ENCODE measurements at regions of chr9 and their contacts with region 1.

Region 1: DNA sequence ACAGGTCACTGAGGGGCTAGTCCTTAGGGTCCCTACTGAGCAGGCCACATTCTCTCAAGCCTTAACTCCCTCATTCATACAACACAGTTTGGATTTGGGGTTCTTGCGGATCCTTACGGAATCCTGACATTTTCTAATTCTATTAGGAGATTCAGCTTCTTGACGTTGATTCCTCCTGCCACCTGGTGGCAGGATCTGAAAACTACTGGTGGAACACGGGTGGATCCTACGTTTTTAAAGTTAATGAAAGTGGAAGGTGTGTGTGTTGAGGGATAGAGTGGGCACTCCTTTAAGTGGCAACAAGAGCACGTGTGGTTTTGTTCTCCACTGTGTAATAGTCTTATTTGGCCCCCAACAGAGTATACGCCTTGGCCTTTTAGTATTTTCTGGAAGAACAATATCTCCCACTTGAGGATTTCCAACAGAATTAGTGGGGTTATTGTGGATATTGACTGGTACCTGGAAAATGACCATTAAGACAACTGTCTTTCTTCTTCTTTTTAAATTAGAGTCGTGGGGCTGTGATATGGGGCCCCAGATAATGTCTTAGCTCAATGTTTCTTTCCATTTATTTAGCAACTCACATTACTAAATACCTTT is 25.2 kb downstream of the SLC28A3 start:
- DNase-seq: peak; percentile 63
- H3K4me3 ChIP-seq: no peak overlapping the region
- H3K27ac ChIP-seq: no peak overlapping the region
- H3K4me1 ChIP-seq: peaks cover 0 to 7% (median 2%) of the 10 kb centered on the region in 4 donors
- H3K27me3 ChIP-seq: no peaks in the 10 kb centered on the region
- CTCF ChIP-seq: peak; percentile 71 to 79 (median 78)
- EP300 ChIP-seq: no peak
- POLR2A ChIP-seq: no peak

Region 2: DNA sequence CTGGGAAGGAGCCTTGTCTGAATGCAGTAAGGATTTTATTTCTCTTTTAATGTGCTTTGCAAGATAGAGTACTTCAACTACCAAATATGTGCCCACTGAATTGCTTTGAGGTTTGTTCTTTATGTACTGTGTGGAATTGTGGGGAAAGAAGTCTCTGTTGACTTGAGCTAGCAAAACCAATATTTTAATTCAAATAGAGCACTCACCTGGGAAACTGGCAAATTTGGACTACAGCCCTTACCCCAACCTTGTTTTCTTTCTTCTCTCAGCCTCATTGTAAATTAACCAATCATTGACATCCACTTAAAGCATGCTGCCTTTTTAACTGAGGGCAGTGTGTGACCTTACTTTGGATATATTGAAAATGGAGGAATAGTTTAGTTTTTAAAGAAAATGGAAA is 1917.8 kb before region 1 on chr9:
- in situ Hi-C with region 1: no loop called
- intact Hi-C with region 1: no loop called
- DNase-seq: no peak
- H3K4me3 ChIP-seq: no peak overlapping the region
- H3K27ac ChIP-seq: no peak overlapping the region
- H3K4me1 ChIP-seq: no peaks in the 10 kb centered on the region
- H3K27me3 ChIP-seq: no peaks in the 10 kb centered on the region
- CTCF ChIP-seq: no peak
- EP300 ChIP-seq: no peak
- POLR2A ChIP-seq: no peak

Region 3: DNA sequence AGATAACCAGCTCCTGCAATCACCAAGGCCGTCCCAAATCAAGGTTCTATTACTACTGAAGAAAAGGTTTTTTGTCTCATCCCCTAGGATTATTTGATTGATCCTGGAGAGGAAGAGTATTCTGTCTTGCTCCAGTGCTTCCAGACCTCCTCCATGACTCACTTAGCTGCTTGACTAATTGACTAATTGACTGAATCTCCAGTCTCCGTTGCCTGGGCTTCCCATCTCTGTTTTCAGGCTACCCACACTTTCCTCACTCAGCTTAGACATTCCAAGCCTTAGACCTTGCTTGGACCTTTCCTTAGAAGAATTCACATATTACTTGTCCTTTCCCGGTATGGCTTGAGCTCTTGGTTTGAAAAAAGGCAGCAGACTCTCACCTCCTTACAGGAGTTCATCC is 837.8 kb before region 1 on chr9:
- in situ Hi-C with region 1: no loop called
- intact Hi-C with region 1: no loop called
- DNase-seq: no peak
- H3K4me3 ChIP-seq: no peak overlapping the region
- H3K27ac ChIP-seq: no peak overlapping the region
- H3K4me1 ChIP-seq: peaks cover 4 to 24% (median 19%) of the 10 kb centered on the region in 4 donors
- H3K27me3 ChIP-seq: no peaks in the 10 kb centered on the region
- CTCF ChIP-seq: no peak
- EP300 ChIP-seq: no peak
- POLR2A ChIP-seq: no peak

Region 4: DNA sequence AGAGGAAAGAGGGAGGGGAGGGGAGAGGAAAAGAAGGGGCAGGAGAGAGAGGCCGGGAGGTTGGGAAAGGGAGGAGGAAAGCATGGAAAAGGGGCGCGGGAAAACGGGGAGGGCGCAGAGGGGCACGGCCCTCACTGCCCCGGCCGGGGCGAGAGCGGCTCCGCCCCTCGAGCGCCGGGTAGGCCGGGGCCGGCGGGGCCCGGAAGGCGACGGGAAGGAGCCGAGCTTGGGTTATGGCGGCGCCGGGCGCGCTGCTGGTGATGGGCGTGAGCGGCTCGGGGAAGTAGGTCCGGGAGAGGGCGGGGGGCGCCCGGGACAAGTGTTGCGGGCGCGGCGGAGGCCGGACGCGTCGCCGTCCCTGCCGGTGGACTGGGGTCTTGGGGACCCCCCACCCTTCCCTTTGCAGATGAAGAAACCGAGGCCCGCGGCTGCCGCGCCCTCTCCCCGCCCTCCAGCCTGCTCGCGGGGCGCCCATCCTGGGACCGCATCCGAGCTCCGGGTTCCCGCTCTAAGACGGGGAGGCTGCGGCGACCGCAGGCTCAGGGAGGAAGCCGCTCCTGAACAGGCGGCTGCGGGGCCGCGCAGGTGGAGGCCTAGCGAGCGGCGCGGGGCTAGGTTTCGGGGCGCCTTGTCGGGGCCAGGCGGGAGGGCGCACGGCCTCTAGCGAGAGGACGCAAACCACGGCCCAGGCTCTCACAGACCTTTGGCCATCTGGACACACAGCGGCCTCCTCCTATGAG is 692.3 kb before region 1 on chr9 and contains the start of gene IDNK:
- in situ Hi-C with region 1: loop called in 1 of 4 experiments (anchors 25 kb)
- intact Hi-C with region 1: no loop called
- DNase-seq: peak; percentile 48
- H3K4me3 ChIP-seq: peak within 1 kb of the TSS; percentile 63 to 82 (median 76)
- H3K27ac ChIP-seq: peak within 1 kb of the TSS; percentile 90 to 94 (median 92)
- H3K4me1 ChIP-seq: peaks cover 0 to 28% (median 17%) of the 10 kb centered on the region in 4 donors
- H3K27me3 ChIP-seq: no peaks in the 10 kb centered on the region
- CTCF ChIP-seq: no peak
- EP300 ChIP-seq: no peak
- POLR2A ChIP-seq: peak; percentile 47
- total RNA-seq, gene IDNK: 4.6 to 18.7 TPM in 2 of 4 donors, not detected in the others

Region 5: DNA sequence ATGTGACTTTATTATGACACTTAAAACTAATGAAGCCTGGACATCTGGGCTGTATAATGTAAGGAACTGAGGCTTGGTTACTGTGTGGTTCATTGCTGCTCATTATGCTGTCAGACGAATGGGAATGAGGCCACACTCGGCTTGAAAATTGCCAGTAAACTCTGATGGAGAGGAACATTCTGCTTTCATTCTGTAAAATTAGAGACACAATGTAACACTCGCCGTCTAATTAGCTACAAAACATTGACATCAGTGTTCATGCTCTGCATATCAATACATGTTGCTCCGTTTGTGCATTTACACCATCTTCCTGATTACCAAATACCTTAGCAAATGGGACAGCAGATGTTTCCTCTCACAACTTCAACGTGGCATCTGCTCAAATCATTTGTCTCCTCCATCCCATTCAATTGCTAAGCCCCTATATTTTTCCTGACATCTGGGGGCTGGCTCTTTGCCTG is 107.9 kb before region 1 on chr9:
- in situ Hi-C with region 1: loop called in 1 of 4 experiments (anchors 25 kb)
- intact Hi-C with region 1: no loop called
- DNase-seq: no peak
- H3K4me3 ChIP-seq: no peak overlapping the region
- H3K27ac ChIP-seq: no peak overlapping the region
- H3K4me1 ChIP-seq: no peaks in the 10 kb centered on the region
- H3K27me3 ChIP-seq: no peaks in the 10 kb centered on the region
- CTCF ChIP-seq: no peak
- EP300 ChIP-seq: no peak
- POLR2A ChIP-seq: no peak

Region 6: DNA sequence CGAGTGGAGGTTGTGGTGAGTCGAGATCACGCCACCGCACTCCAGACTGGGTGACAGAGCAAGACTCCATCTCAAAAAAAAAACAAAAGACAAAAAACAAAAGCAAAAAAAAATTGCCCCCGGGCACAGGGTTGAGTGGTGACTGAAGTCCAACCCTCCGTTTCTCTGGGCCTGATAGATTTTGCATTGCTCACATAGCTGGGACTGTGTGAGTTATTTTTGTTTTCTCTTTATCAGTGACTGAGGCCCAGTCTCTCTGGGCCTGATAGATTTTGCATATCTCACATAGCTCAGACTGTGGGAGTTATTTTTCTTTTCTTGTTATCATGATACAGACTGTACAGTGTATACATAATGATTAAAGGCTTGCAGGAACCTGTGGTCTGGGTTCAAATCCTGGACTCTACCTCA is 27.7 kb after region 1 on chr9:
- in situ Hi-C with region 1: no loop called
- intact Hi-C with region 1: no loop called
- DNase-seq: no peak
- H3K4me3 ChIP-seq: no peak overlapping the region
- H3K27ac ChIP-seq: no peak overlapping the region
- H3K4me1 ChIP-seq: peaks cover 0 to 10% (median 0%) of the 10 kb centered on the region in 4 donors
- H3K27me3 ChIP-seq: no peaks in the 10 kb centered on the region
- CTCF ChIP-seq: no peak
- EP300 ChIP-seq: no peak
- POLR2A ChIP-seq: no peak

Region 7: DNA sequence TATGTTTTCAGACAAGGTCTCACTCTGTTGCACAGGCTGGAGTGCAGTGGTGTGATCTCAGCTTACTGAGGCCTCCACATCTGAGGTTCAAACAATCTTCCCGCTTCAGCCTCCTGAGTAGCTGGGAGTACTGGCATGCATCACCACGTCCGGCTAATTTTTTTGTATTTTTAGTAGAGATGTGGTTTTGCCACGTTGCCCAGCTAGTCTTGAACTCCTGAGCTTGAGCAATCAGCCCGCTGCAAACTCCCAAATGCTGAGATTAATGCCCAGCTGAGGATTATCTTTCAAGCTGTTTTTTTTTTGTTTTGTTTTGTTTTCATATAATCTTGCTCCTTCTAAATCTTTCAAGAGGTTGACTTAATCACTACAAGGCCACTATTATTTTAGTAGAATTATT is 72.4 kb after region 1 on chr9:
- in situ Hi-C with region 1: no loop called
- intact Hi-C with region 1: no loop called
- DNase-seq: no peak
- H3K4me3 ChIP-seq: no peak overlapping the region
- H3K27ac ChIP-seq: no peak overlapping the region
- H3K4me1 ChIP-seq: no peaks in the 10 kb centered on the region
- H3K27me3 ChIP-seq: no peaks in the 10 kb centered on the region
- CTCF ChIP-seq: no peak
- EP300 ChIP-seq: no peak
- POLR2A ChIP-seq: no peak

Measured in transverse colon (tissue), 4 donors.